ENCODE measurements at regions of chr20 and their contacts with region 1.

Region 1: DNA sequence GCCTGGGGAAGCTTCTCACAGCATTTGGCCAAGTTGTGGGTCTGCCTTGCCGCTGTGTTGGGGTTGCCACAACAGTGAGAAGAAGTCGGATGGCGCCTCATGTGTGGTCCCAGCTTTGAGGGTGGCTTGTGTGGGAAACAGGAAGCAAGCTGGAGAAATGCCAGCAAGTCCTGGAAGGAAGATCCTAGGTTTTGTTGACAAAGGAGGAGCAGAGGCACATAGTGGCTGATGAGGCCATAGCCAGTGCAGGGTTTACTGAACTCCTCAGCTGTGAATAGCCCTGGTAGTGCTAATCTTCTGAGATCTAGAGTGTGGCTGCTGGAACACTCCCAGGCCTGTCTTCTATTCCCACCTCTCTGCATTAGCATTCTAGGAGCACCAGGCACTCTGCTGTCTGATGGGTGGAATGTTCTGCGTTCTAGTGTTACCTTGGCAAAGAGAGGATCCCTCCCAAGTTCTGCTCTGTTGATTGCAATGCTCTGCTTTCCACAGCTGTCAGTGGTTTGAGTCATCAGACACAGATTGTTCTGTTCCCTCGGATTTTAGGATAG is 25.2 kb downstream of the SNPH start:
- DNase-seq: no peak
- ATAC-seq: no peak
- H3K4me3 ChIP-seq: no peak overlapping the region
- H3K4me3 Mint-ChIP-seq: no peak overlapping the region
- H3K27ac ChIP-seq: no peak overlapping the region
- H3K27ac Mint-ChIP-seq: peak overlapping the region in 7 of 9 donors; percentile 12 to 81 (median 69)
- H3K4me1 ChIP-seq: peaks cover 0 to 42% of the 10 kb centered on the region in 2 donors
- H3K4me1 Mint-ChIP-seq: peaks cover 22 to 70% (median 59%) of the 10 kb centered on the region in 7 donors
- H3K27me3 ChIP-seq: no peaks in the 10 kb centered on the region
- H3K27me3 Mint-ChIP-seq: no peaks in the 10 kb centered on the region

Region 2: DNA sequence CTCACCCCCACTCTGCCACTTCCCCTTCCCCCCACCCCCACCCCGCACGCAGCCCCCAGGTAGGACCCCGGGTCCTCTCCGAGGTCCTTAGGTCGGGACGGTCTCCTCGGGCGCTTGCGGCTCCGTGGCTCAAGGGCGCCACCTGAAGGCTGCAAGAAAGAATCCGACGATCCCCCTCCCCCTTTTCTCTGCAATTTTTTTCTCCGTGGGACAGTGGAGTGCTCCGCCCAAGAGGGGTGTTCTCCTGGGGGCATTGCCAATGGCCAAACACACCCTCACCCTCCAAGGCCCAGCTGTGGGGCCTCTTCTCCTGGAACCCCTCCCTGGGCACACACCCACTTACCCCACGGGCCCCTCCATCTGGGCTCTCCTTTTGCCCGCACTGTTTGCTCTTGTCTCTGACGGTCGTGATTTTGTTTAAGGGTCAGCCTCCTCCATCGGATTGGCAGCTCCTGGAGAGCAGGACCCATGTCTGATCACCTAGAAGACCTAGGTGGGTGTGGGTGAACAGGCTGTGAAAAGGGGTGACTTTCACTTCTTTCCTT is 105.4 kb before region 1 on chr20:
- CTCF ChIA-PET with region 1: no interaction called
- POLR2A ChIA-PET with region 1: no interaction called
- intact Hi-C with region 1: no loop called
- DNase-seq: peak; percentile 18 to 64 (median 36)
- ATAC-seq: peak; percentile 65
- H3K4me3 ChIP-seq: no peak overlapping the region
- H3K4me3 Mint-ChIP-seq: peak overlapping the region in 9 of 10 donors; percentile 49 to 83 (median 73)
- H3K27ac ChIP-seq: no peak overlapping the region
- H3K27ac Mint-ChIP-seq: peak overlapping the region in 2 of 9 donors; percentile 44 to 86
- H3K4me1 ChIP-seq: no peaks in the 10 kb centered on the region
- H3K4me1 Mint-ChIP-seq: peaks cover 7 to 13% (median 11%) of the 10 kb centered on the region in 7 donors
- H3K27me3 ChIP-seq: peaks cover 0 to 3% of the 10 kb centered on the region in 2 donors
- H3K27me3 Mint-ChIP-seq: peaks cover 19 to 51% (median 33%) of the 10 kb centered on the region in 5 donors

Region 3: GRCh38 chr20:1274485-1275311 is 16.6 kb before region 1 on chr20:
- CTCF ChIA-PET with region 1: interaction called, 6 read pairs
- POLR2A ChIA-PET with region 1: interaction called, 19 read pairs
- intact Hi-C with region 1: no loop called
- DNase-seq: no peak
- ATAC-seq: no peak
- H3K4me3 ChIP-seq: no peak overlapping the region
- H3K4me3 Mint-ChIP-seq: peak overlapping the region in 1 of 10 donors; percentile 56
- H3K27ac ChIP-seq: no peak overlapping the region
- H3K27ac Mint-ChIP-seq: peak overlapping the region in 7 of 9 donors; percentile 1 to 95 (median 79)
- H3K4me1 ChIP-seq: peaks cover 0 to 24% of the 10 kb centered on the region in 2 donors
- H3K4me1 Mint-ChIP-seq: peaks cover 4 to 68% (median 54%) of the 10 kb centered on the region in 7 donors
- H3K27me3 ChIP-seq: no peaks in the 10 kb centered on the region
- H3K27me3 Mint-ChIP-seq: no peaks in the 10 kb centered on the region